MCF 10A (cell line): ENCODE measurements at regions of chr16 and their contacts with region 1.

Region 1: DNA sequence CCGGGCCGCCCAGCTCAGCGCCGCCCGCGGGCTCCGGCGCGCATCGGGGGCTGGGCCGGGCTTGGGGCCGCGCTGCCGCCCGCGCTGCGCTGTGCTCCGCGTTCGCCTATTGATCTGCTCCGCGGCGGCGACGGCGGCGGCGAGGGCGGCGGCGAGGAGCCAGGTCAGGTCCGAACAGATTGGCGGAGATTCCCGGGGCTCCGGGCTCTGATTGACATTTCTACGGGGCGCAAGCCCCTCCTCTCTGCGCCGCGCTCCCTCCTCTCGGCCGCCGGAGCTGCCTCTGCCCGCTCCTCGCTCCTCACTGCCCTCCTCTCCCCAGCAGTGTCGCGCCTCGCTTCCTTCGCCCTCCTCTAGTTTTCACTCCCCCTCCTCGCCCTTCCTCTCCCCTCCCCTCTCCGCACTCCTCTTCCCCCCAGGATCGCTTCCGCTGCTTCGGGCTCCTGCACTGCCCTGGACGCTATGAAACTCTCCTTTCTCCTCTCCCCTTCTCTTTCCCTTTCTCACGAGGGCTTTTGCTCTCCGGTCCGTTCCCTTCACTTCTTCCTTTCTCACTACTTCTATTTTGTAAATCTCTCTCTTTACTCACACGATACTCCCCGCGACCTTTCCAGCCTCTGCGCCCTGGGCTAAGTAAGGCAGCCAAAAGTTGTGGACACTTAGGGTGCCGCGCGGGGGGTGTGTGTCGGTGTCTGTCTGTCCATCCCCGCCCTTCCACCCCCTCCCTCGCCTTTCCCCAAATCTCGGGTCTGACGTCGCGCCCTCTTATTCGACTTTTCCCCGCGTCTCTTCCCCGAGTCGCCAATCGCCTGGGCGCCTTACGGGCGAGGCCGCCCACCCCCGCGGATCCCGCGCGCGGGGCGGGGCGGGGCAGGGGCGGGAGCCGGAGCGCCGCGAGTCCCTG is at the start of gene IRX3:
- DNase-seq: peak; percentile 97
- H3K4me3 Mint-ChIP-seq: peak within 1 kb of the TSS; percentile 94
- H3K27ac Mint-ChIP-seq: peak within 1 kb of the TSS; percentile 95
- H3K4me1 Mint-ChIP-seq: peaks cover 4% of the 10 kb centered on the region
- H3K27me3 Mint-ChIP-seq: no peaks in the 10 kb centered on the region
- CTCF ChIP-seq: no peak
- total RNA-seq, gene IRX3: 15.7 and 17.6 TPM in 2 replicates

Region 2: DNA sequence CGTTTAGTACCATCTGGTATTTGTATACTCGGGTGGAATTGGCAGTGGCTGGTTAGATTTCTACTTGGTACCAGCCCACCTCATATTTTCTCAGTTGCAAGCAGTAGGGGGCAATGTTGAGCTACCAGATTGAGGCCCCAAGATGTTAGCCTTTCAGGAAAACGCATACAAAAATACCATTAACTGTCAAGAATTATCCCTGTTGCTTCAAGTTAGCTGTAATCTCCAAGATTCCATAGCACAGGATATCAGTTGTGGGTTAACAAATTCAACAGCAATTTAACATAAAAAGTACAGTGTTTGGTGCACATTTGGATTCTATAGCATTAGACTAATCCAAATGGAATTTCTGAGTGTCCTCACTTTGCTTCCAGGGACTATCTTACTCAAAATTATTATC is 394.2 kb before region 1 on chr16:
- CTCF ChIA-PET with region 1: interaction called, 7 read pairs
- POLR2A ChIA-PET with region 1: interaction called, 16 read pairs
- intact Hi-C with region 1: loop called (anchors 1 kb)
- DNase-seq: peak; percentile 77
- H3K4me3 Mint-ChIP-seq: no peak overlapping the region
- H3K27ac Mint-ChIP-seq: no peak overlapping the region
- H3K4me1 Mint-ChIP-seq: peaks cover 16% of the 10 kb centered on the region
- H3K27me3 Mint-ChIP-seq: no peaks in the 10 kb centered on the region
- CTCF ChIP-seq: peak; percentile 67

Region 3: GRCh38 chr16:54193665-54194333 is 92.5 kb before region 1 on chr16:
- CTCF ChIA-PET with region 1: interaction called, 3 read pairs
- POLR2A ChIA-PET with region 1: interaction called, 6 read pairs
- intact Hi-C with region 1: loop called (anchors 2 kb)
- DNase-seq: peak; percentile 86
- H3K4me3 Mint-ChIP-seq: peak overlapping the region; percentile 55
- H3K27ac Mint-ChIP-seq: peak overlapping the region; percentile 90
- H3K4me1 Mint-ChIP-seq: peaks cover 5% of the 10 kb centered on the region
- H3K27me3 Mint-ChIP-seq: no peaks in the 10 kb centered on the region
- CTCF ChIP-seq: peak; percentile 83

Region 4: DNA sequence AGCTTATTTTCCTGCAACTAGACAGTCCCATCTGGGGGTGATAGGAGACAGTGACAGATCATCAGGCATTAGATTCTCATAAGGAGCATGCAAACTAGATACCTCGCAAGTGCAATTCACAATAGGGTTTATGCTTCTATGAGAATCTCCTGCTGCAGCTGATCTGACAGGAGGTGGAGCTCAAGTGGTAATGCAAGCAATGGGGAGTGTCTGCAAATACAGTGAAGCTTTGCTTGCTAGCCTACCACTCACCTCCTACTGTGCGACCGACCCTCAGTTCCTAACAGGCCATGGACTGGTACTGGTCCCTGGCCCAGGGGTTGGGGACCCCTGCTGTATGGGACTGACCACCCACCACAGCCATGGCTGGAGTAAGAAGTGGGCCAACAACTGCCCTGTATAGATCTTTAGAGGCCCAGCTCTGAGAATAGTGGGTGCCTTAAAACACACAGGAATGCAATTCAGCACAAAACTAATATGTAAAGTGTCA is 26.2 kb after region 1 on chr16:
- CTCF ChIA-PET with region 1: no interaction called
- POLR2A ChIA-PET with region 1: no interaction called
- intact Hi-C with region 1: no loop called
- DNase-seq: no peak
- H3K4me3 Mint-ChIP-seq: no peak overlapping the region
- H3K27ac Mint-ChIP-seq: no peak overlapping the region
- H3K4me1 Mint-ChIP-seq: no peaks in the 10 kb centered on the region
- H3K27me3 Mint-ChIP-seq: no peaks in the 10 kb centered on the region
- CTCF ChIP-seq: no peak

Region 5: DNA sequence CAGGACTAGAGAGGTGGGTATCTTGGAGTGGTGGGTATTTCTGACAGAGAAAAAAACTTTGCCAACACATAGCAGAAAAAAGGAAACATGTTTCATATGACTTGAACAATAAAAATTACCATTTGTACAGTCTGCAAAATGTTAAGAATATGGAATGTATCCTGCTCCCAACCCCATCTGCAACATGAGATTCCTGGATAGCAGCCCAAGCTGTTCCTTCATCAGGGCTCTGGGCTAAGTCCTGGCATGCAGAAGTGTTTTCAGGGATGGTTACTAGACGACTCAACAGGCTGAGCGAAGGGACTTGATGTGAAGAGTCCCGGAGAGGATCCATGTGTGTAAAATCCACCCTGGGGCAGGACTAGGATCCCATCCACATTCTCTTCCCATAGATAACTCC is 121.3 kb after region 1 on chr16:
- CTCF ChIA-PET with region 1: no interaction called
- POLR2A ChIA-PET with region 1: no interaction called
- intact Hi-C with region 1: no loop called
- DNase-seq: peak; percentile 38
- H3K4me3 Mint-ChIP-seq: no peak overlapping the region
- H3K27ac Mint-ChIP-seq: no peak overlapping the region
- H3K4me1 Mint-ChIP-seq: peaks cover 15% of the 10 kb centered on the region
- H3K27me3 Mint-ChIP-seq: no peaks in the 10 kb centered on the region
- CTCF ChIP-seq: no peak

Region 6: GRCh38 chr16:54447591-54448440 is 161.5 kb after region 1 on chr16:
- CTCF ChIA-PET with region 1: interaction called, 7 read pairs
- POLR2A ChIA-PET with region 1: interaction called, 53 read pairs
- intact Hi-C with region 1: loop called (anchors 1 kb)
- DNase-seq: peak; percentile 93
- H3K4me3 Mint-ChIP-seq: no peak overlapping the region
- H3K27ac Mint-ChIP-seq: no peak overlapping the region
- H3K4me1 Mint-ChIP-seq: peaks cover 32% of the 10 kb centered on the region
- H3K27me3 Mint-ChIP-seq: no peaks in the 10 kb centered on the region
- CTCF ChIP-seq: no peak

Region 7: GRCh38 chr16:54657058-54657708 is 370.8 kb after region 1 on chr16:
- CTCF ChIA-PET with region 1: interaction called, 3 read pairs
- POLR2A ChIA-PET with region 1: interaction called, 31 read pairs
- intact Hi-C with region 1: no loop called
- DNase-seq: peak; percentile 98
- H3K4me3 Mint-ChIP-seq: peak overlapping the region; percentile 63
- H3K27ac Mint-ChIP-seq: peak overlapping the region; percentile 73
- H3K4me1 Mint-ChIP-seq: peaks cover 38% of the 10 kb centered on the region
- H3K27me3 Mint-ChIP-seq: no peaks in the 10 kb centered on the region
- CTCF ChIP-seq: no peak

Region 8: DNA sequence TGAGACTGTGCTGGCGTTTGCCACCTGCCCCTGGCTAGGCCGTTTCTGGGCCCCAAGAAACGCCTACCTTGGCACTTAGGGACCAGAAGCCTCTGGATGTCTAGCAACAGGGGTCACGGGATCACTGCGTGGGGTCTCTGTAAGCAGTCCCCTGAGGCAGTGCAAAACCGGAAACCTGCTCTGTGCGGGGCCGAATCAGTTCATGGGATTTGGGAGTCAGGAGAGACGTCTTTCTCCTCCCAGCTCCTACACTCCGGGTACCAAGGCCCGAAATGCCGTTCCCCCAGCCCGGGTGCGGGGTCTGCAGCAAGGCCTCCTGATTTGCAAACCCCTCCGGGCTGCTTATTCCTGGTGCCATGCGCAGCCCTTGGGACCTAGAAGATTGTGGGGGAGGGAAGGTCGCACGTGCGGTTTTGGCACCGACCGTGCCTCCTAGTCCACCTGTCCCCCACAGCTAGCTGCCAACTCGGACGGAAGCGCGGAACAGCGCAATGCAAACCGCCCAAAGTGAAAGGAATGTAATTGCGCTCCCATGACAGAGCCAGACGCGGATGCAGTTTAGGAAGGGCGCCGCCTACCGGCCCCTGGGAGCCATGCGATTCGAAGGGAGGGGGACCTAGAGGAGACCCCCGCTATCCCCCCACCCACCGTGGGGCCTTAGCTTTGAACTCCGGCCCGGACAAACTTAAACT is 650.8 kb after region 1 on chr16:
- CTCF ChIA-PET with region 1: interaction called, 4 read pairs
- POLR2A ChIA-PET with region 1: interaction called, 352 read pairs
- intact Hi-C with region 1: loop called (anchors 2 kb)
- DNase-seq: peak; percentile 77
- H3K4me3 Mint-ChIP-seq: peak overlapping the region; percentile 88
- H3K27ac Mint-ChIP-seq: peak overlapping the region; percentile 97
- H3K4me1 Mint-ChIP-seq: peaks cover 10% of the 10 kb centered on the region
- H3K27me3 Mint-ChIP-seq: no peaks in the 10 kb centered on the region
- CTCF ChIP-seq: peak; percentile 80